Heart left ventricle (tissue), 16 donors: ENCODE measurements at regions of chr15 and their contacts with region 1.

Region 1: DNA sequence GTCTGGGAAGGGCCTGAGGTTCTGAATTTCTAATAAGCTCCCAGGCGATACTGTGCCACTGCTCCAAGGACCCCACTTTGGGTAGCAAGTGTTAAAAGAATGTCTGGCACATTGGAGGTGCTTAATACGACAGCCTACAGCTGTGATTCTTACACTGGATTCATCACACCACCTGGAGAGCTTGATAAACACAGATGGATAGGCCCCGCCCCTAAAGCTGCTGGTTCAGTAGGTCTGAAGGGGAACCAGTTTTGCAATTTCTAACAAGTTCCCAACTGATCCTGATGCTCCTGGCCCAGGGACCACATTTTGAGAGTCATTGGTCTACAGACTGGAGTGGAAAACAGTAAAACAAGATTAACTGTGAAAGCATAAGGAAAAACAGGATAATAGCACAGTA is 124.8 kb upstream of the ST8SIA2 start:
- DNase-seq: no peak
- ATAC-seq: no peak
- H3K4me3 ChIP-seq: no peak overlapping the region
- H3K27ac ChIP-seq: no peak overlapping the region
- H3K4me1 ChIP-seq: peaks cover 0 to 6% (median 0%) of the 10 kb centered on the region in 12 donors
- H3K27me3 ChIP-seq: peaks cover 0 to 4% (median 0%) of the 10 kb centered on the region in 9 donors
- CTCF ChIP-seq: no peak
- POLR2A ChIP-seq: no peak

Region 2: DNA sequence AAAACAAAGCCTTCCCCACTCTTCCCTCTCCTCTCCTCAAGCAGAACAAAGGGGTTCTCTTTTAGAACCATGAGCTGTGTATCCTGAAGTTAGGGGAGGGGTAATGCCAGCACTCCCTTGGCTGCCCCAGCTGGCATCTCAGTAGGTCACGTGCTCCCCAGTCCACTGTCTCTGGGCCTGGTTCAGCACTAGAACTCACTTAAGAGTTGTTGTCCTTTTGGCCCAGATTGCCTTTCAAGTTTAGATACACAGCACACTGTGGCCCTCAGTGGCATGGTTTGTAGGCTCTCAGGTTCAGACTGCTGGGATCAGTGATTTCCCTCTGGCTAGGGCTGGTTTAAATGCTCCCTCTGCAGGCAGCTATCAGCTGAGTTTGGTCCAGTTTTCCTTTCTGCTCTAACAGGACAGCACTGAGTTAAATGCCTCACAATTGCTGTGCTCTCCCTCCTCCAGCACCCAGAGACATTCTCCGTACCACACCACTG is 63.6 kb before region 1 on chr15:
- intact Hi-C with region 1: loop called in 1 of 10 experiments (anchors 10 kb)
- DNase-seq: peak in 3 of 5 donors; percentile 25 to 34 (median 28)
- ATAC-seq: peak; percentile 49 to 83 (median 71)
- H3K4me3 ChIP-seq: no peak overlapping the region
- H3K27ac ChIP-seq: peak overlapping the region in 4 of 12 donors; percentile 8 to 46 (median 18)
- H3K4me1 ChIP-seq: peaks cover 0 to 9% (median 0%) of the 10 kb centered on the region in 12 donors
- H3K27me3 ChIP-seq: no peaks in the 10 kb centered on the region
- CTCF ChIP-seq: peak in 11 of 12 donors; percentile 9 to 51 (median 34)
- POLR2A ChIP-seq: no peak